Activated T-helper 1 cell treated with anti-CD3 and anti-CD28 coated beads, Interleukin-12 subunit alpha, Interleukin-12 subunit beta, Interleukin-2, Interleukin-4 antibody, amounts not matched to agents 30 ng/mL and 10 ng/mL and 1 ng/mL, durations not matched to agents 14 hours and 24 hours and 36 hours (primary cell): ENCODE measurements at regions of chr11 and their contacts with region 1.

Region 1: GRCh38 chr11:19561011-19561410 is 151.6 kb upstream of the NAV2 start:
- DNase-seq: no peak
- H3K4me3 Mint-ChIP-seq: no peak overlapping the region
- H3K27ac Mint-ChIP-seq: no peak overlapping the region
- H3K4me1 Mint-ChIP-seq: no peaks in the 10 kb centered on the region
- H3K27me3 Mint-ChIP-seq: peaks cover 10% of the 10 kb centered on the region

Region 2: DNA sequence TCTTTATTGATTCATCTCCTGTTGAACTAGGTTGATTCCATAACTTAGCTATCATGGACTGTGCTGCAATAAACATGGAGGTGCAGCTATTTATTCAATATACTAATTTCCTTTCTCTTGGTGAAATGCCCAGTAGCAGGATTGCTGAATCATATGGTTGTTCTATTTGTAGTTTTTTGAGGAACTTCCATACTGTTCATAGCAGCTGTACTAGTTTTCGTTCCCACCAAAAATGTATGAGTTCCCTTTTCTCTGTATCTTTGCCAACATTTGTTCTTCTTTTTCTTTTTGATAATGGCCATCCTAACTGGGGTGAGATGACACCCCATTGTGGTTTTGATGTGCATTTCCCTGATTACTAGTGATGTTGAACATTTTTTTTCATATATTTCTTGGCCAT is 64.4 kb after region 1 on chr11:
- intact Hi-C with region 1: no loop called
- DNase-seq: no peak
- H3K4me3 Mint-ChIP-seq: no peak overlapping the region
- H3K27ac Mint-ChIP-seq: no peak overlapping the region
- H3K4me1 Mint-ChIP-seq: no peaks in the 10 kb centered on the region
- H3K27me3 Mint-ChIP-seq: no peaks in the 10 kb centered on the region

Region 3: GRCh38 chr11:19660076-19660475 is 99.1 kb after region 1 on chr11:
- intact Hi-C with region 1: no loop called
- DNase-seq: no peak
- H3K4me3 Mint-ChIP-seq: no peak overlapping the region
- H3K27ac Mint-ChIP-seq: no peak overlapping the region
- H3K4me1 Mint-ChIP-seq: peaks cover 5% of the 10 kb centered on the region
- H3K27me3 Mint-ChIP-seq: peaks cover 8% of the 10 kb centered on the region

Region 4: GRCh38 chr11:19742588-19743292 is 181.7 kb after region 1 on chr11:
- intact Hi-C with region 1: loop called (anchors 1 kb)
- DNase-seq: peak; percentile 43
- H3K4me3 Mint-ChIP-seq: no peak overlapping the region
- H3K27ac Mint-ChIP-seq: no peak overlapping the region
- H3K4me1 Mint-ChIP-seq: no peaks in the 10 kb centered on the region
- H3K27me3 Mint-ChIP-seq: peaks cover 5% of the 10 kb centered on the region

Region 5: DNA sequence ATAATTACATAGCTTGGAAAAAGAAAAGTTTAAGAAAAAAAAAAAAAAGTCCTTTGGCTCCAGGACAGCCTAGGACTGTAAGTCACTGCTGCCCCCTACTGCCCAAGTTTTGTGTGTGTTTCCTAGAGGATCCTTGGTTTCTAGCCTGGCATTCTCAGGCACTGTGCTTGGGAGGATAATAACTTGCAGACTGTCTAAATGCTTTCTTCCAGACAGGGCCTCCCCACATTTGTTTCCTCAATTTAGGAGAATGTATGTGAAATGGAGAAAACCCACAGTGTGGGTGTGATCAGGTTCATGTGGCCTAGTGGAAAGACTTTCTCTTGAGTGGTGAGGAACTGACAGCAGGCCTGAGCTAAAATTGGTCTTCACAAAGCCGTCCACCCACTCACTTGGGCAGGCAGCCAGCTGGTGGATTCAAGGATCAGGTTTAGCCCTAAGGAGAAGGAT is 342.6 kb after region 1 on chr11:
- intact Hi-C with region 1: loop called (anchors 1 kb)
- DNase-seq: no peak
- H3K4me3 Mint-ChIP-seq: no peak overlapping the region
- H3K27ac Mint-ChIP-seq: no peak overlapping the region
- H3K4me1 Mint-ChIP-seq: no peaks in the 10 kb centered on the region
- H3K27me3 Mint-ChIP-seq: no peaks in the 10 kb centered on the region